Activated CD4-positive, alpha-beta memory T cell treated with anti-CD3 and anti-CD28 coated beads, Interleukin-2, amount 10 ng/mL, durations not matched to agents 7 days and 5 days (primary cell): ENCODE measurements at regions of chr14 and their contacts with region 1.

Region 1: GRCh38 chr14:71320107-71320733 is 413.0 kb downstream of the PCNX1 start:
- DNase-seq: peak; percentile 99
- H3K4me3 Mint-ChIP-seq: peak within 1 kb of the TSS; percentile 87
- H3K27ac Mint-ChIP-seq: peak within 1 kb of the TSS; percentile 82
- H3K4me1 Mint-ChIP-seq: peaks cover 45% of the 10 kb centered on the region
- H3K27me3 Mint-ChIP-seq: peaks cover 2% of the 10 kb centered on the region

Region 2: DNA sequence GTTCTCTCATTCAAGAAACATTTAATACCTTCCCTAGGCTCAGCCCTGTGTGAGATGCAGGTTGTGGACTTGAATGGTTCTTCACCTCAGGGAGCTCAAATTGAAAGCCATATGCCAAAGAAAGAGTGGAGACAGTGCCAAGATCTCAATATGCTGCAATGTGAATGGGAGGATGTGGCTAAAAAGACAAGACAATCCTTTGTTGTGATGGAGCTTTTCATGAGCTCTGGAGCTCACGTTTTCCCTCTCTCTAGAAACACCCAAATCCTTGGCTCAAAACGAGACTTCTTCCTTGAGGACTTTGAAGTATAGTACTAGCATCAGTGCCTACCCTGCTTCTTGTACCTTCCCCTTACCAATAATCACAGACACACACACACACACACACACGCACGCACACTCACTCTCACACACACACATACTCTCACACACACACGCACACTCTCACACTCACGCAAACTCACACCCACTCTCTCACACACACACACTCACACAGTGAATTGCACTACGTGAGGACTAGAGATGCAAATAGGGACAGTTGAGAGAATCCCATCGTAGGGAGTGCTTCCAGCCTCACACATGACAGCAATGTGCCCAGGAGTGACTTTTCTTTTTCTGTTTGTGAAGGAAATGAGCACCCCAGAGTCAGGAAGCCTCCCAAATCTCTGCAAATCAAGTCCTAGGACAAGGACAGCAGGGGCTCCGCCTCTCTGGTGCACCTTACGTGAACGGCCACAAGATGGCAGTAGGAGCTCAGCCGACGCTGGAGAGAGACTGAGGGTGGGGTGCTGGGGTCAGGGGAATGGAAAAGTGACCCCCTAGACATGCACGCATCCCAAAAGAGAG is 181.5 kb before region 1 on chr14:
- CTCF ChIA-PET with region 1: interaction called, 25 read pairs
- POLR2A ChIA-PET with region 1: interaction called, 86 read pairs
- DNase-seq: peak; percentile 63
- H3K4me3 Mint-ChIP-seq: no peak overlapping the region
- H3K27ac Mint-ChIP-seq: no peak overlapping the region
- H3K4me1 Mint-ChIP-seq: peaks cover 47% of the 10 kb centered on the region
- H3K27me3 Mint-ChIP-seq: no peaks in the 10 kb centered on the region

Region 3: DNA sequence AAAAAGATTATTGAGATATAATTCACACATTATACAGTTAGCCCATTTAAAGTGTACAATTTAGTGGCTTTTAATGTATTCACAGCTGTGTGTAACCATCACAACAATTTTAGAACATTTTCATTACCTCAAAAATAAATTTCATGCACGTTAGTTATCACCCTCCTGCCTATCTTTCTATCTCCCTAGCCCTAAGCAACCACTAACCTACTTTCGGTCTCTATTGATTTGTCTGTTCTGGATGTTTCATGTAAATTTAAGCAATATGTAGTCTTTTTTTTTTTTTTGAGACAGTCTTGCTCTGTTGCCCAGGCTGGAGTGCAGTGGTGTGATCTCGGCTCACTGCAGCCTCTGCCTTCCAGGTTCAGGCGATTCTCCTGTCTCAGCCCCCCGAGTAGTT is 26.5 kb after region 1 on chr14:
- CTCF ChIA-PET with region 1: no interaction called
- POLR2A ChIA-PET with region 1: no interaction called
- DNase-seq: no peak
- H3K4me3 Mint-ChIP-seq: no peak overlapping the region
- H3K27ac Mint-ChIP-seq: peak overlapping the region; percentile 16
- H3K4me1 Mint-ChIP-seq: peaks cover 48% of the 10 kb centered on the region
- H3K27me3 Mint-ChIP-seq: no peaks in the 10 kb centered on the region

Region 4: DNA sequence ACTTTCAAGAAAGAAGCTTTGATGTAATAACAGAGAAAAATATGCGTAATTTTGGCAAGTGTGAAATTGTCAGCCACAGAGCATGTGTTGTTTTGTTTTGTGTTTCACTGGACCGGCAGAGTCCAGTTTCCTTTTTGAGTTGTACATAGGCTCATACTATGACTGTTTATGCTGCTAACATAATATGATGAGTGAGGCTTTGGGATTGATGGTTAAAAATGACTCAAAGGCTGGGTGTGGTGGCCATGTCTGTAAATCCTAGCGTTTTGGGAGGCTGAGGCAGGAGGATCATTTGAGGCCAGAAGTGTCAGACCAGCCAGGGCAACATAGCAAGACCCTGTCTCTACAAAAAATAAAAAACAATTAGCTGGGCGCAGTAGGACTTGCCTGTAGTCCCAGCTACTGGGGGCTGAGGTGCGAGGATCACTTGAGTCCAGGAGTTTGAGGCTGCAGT is 75.0 kb after region 1 on chr14:
- CTCF ChIA-PET with region 1: interaction called, 6 read pairs
- POLR2A ChIA-PET with region 1: interaction called, 80 read pairs
- DNase-seq: no peak
- H3K4me3 Mint-ChIP-seq: no peak overlapping the region
- H3K27ac Mint-ChIP-seq: no peak overlapping the region
- H3K4me1 Mint-ChIP-seq: peaks cover 49% of the 10 kb centered on the region
- H3K27me3 Mint-ChIP-seq: no peaks in the 10 kb centered on the region

Region 5: DNA sequence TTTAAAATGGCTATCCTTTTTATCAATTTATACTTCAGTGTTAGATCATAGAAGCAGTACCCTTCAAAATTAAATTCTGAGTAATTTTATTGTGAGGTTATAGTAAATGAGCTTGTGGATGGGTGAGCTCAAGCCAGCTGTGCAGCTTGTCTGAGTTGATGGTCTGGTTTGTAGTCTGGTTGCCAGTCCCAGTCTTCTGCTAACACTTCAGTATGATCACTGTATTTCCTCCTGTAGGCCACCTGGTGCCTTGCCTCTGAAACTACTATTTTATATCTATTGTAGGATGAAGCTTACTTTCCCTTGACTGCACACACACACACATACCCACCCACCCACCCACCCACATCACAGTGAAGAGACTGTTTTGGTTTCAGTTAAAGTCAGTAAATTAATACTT is 83.4 kb after region 1 on chr14:
- CTCF ChIA-PET with region 1: interaction called, 74 read pairs
- POLR2A ChIA-PET with region 1: interaction called, 80 read pairs
- DNase-seq: peak; percentile 45
- H3K4me3 Mint-ChIP-seq: no peak overlapping the region
- H3K27ac Mint-ChIP-seq: no peak overlapping the region
- H3K4me1 Mint-ChIP-seq: peaks cover 35% of the 10 kb centered on the region
- H3K27me3 Mint-ChIP-seq: no peaks in the 10 kb centered on the region

Region 6: GRCh38 chr14:71555654-71556559 is 235.7 kb after region 1 on chr14:
- CTCF ChIA-PET with region 1: no interaction called
- POLR2A ChIA-PET with region 1: interaction called, 14 read pairs
- DNase-seq: peak; percentile 52
- H3K4me3 Mint-ChIP-seq: peak overlapping the region; percentile 57
- H3K27ac Mint-ChIP-seq: peak overlapping the region; percentile 86
- H3K4me1 Mint-ChIP-seq: peaks cover 51% of the 10 kb centered on the region
- H3K27me3 Mint-ChIP-seq: no peaks in the 10 kb centered on the region

Region 7: DNA sequence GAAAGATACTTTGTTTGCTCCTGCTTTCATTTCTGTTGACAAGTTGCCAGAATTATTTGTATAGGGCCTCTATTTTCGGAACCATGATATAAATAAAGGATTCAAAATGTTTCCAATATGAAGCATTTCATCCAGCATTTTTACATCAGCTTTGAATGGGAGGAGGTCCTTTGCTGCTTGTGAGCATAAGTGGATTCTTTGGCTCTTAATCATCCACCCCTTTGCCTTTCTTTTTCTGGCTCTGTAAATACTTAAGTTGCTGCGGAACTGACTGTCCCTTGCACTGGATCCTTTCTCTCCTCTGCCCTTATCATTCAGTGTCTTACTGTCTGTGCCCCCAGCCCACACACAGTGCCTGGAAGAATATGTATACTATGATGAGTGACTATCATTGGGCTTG is 254.8 kb after region 1 on chr14:
- CTCF ChIA-PET with region 1: no interaction called
- POLR2A ChIA-PET with region 1: no interaction called
- DNase-seq: no peak
- H3K4me3 Mint-ChIP-seq: no peak overlapping the region
- H3K27ac Mint-ChIP-seq: no peak overlapping the region
- H3K4me1 Mint-ChIP-seq: peaks cover 19% of the 10 kb centered on the region
- H3K27me3 Mint-ChIP-seq: no peaks in the 10 kb centered on the region